ENCODE measurements at regions of chr3 and their contacts with region 1.

Region 1: GRCh38 chr3:116473602-116474001 is 28.3 kb upstream of the LSAMP start:
- DNase-seq: no peak
- ATAC-seq: no peak
- H3K4me3 ChIP-seq: no peak overlapping the region
- H3K4me3 Mint-ChIP-seq: no peak overlapping the region
- H3K27ac ChIP-seq: no peak overlapping the region
- H3K27ac Mint-ChIP-seq: no peak overlapping the region
- H3K4me1 ChIP-seq: no peaks in the 10 kb centered on the region
- H3K4me1 Mint-ChIP-seq: no peaks in the 10 kb centered on the region
- H3K27me3 ChIP-seq: no peaks in the 10 kb centered on the region
- H3K27me3 Mint-ChIP-seq: no peaks in the 10 kb centered on the region
- CTCF ChIP-seq: no peak

Region 2: DNA sequence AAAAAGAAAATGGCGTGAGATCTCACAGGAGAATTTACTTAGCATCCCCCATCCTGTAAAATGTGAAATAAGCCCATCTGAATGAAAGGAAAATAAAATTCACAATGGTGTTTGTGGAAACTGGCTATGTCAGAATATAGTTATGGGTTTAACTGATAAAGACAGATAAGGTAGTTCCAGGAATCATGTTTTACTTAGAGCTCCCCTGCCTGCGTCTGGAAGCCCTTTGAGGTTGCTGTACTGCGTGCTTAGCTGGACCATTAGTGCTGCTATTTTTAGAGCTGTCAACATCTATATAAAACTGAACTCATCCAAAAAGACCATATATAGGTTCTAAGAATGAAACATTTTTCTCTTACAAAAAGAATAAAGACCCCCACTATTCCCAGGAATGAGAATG is 159.1 kb before region 1 on chr3:
- CTCF ChIA-PET with region 1: no interaction called
- POLR2A ChIA-PET with region 1: no interaction called
- intact Hi-C with region 1: no loop called
- DNase-seq: no peak
- ATAC-seq: no peak
- H3K4me3 ChIP-seq: no peak overlapping the region
- H3K4me3 Mint-ChIP-seq: no peak overlapping the region
- H3K27ac ChIP-seq: no peak overlapping the region
- H3K27ac Mint-ChIP-seq: no peak overlapping the region
- H3K4me1 ChIP-seq: no peaks in the 10 kb centered on the region
- H3K4me1 Mint-ChIP-seq: no peaks in the 10 kb centered on the region
- H3K27me3 ChIP-seq: no peaks in the 10 kb centered on the region
- H3K27me3 Mint-ChIP-seq: no peaks in the 10 kb centered on the region
- CTCF ChIP-seq: no peak

Region 3: GRCh38 chr3:116423374-116423773 is 50.2 kb before region 1 on chr3:
- CTCF ChIA-PET with region 1: no interaction called
- POLR2A ChIA-PET with region 1: no interaction called
- intact Hi-C with region 1: loop called in 1 of 2 experiments (anchors 1 kb)
- DNase-seq: no peak
- ATAC-seq: no peak
- H3K4me3 ChIP-seq: no peak overlapping the region
- H3K4me3 Mint-ChIP-seq: no peak overlapping the region
- H3K27ac ChIP-seq: no peak overlapping the region
- H3K27ac Mint-ChIP-seq: no peak overlapping the region
- H3K4me1 ChIP-seq: no peaks in the 10 kb centered on the region
- H3K4me1 Mint-ChIP-seq: no peaks in the 10 kb centered on the region
- H3K27me3 ChIP-seq: no peaks in the 10 kb centered on the region
- H3K27me3 Mint-ChIP-seq: no peaks in the 10 kb centered on the region
- CTCF ChIP-seq: no peak

Region 4: DNA sequence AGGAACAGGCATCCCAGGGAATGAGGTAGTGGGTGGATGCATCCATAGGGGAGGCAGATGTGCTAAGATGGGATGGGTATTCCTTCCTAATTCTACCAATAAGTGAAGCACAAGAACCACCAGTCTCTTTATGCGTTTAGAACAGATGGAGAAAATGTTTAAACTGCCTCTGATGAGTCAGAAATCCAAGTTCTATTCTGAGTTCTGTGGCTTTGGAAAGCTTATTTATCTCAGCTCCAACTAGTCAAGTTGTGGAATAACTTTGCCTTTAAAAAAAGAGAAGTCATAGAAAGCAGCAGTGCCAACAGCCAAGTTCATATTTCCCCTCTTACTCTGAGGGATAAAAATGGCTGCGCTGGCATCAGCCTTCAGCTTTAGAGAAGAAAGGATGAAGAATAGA is 1799.4 kb after region 1 on chr3:
- CTCF ChIA-PET with region 1: no interaction called
- POLR2A ChIA-PET with region 1: no interaction called
- intact Hi-C with region 1: no loop called
- DNase-seq: no peak
- ATAC-seq: no peak
- H3K4me3 ChIP-seq: no peak overlapping the region
- H3K4me3 Mint-ChIP-seq: no peak overlapping the region
- H3K27ac ChIP-seq: no peak overlapping the region
- H3K27ac Mint-ChIP-seq: no peak overlapping the region
- H3K4me1 ChIP-seq: no peaks in the 10 kb centered on the region
- H3K4me1 Mint-ChIP-seq: no peaks in the 10 kb centered on the region
- H3K27me3 ChIP-seq: no peaks in the 10 kb centered on the region
- H3K27me3 Mint-ChIP-seq: no peaks in the 10 kb centered on the region
- CTCF ChIP-seq: no peak

Measured in CD8-positive, alpha-beta T cell (primary cell).